GM10248 (cell line): ENCODE measurements at regions of chr1 and their contacts with region 1.

Region 1: DNA sequence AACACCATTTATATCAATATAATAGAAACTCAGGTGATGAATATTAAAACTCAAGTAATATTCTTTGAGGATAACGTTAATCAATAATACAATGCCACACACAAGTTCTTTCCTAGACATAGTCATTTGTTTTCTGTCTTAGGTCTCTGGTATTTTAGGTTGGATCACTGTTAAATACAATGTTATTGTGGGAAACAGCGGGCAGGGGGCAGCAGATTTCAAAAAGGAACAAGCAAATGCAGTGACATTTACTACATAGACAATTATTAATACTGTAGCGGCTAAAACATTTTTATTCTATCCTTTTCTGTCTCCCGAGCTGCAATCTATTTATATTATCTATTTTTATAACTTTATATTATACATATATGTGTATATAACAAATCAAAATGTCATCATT is 186.4 kb upstream of the ZNHIT6 start:
- DNase-seq: peak; percentile 49
- CTCF ChIP-seq: peak; percentile 70

Region 2: DNA sequence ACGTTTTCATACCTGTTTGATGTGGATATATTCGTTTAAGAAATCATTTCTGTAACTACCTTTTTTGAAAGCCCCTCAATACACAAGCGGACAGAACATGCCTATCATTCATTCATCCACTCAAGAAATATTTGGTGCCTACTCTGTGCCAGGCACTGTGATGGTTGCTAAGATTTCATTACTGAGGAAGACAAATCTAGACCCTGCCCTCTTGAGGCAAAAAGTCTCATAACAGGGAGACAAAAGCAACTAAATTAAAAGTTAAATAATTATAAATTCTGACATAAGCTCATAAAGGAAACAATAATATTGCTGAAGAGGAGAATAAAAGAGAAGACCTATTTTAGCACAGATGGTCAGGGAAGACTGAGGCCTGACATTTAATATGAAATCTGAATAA is 17.1 kb after region 1 on chr1:
- CTCF ChIA-PET with region 1: interaction called, 14 read pairs
- POLR2A ChIA-PET with region 1: no interaction called
- DNase-seq: no peak
- CTCF ChIP-seq: no peak

Region 3: GRCh38 chr1:85940656-85941306 is 46.1 kb after region 1 on chr1:
- CTCF ChIA-PET with region 1: no interaction called
- POLR2A ChIA-PET with region 1: no interaction called
- DNase-seq: no peak
- CTCF ChIP-seq: no peak